Right ventricle myocardium superior (tissue), 1 donor: ENCODE measurements at regions of chr17 and their contacts with region 1.

Region 1: DNA sequence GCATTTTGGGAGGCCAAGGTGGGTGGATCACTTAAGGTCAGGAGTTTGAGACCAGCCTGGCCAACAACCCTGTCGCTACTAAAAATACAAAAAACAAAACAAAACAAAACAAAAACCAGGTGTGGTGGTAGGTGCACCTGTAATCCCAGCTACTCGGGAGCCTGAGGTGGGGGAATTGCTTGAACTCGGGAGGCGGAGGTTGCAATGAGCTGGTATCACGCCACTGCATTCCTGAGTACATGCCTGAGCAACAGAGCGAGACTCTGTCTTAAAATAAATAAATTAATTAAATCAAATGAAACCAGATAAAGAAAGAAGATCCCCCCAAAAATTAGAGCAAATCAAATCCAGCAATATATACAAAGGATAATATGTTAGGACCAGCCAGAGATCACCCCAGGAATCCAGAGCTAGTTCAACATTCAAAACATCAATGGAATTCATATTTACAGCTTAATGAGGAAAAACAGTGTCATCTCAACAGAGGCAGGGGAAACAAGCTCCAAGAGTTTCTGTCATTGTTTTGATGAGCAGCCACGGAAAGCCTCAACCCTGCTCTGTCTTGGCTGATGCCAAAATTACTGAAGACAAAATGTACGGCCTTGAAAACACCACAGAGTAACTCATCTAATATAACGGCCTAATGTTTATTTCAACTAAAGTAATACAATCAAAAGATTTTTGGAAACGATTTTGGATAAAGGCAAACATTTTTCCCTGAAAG is 3.7 kb downstream of the PEMT start:
- DNase-seq: no peak
- ATAC-seq: no peak

Region 2: DNA sequence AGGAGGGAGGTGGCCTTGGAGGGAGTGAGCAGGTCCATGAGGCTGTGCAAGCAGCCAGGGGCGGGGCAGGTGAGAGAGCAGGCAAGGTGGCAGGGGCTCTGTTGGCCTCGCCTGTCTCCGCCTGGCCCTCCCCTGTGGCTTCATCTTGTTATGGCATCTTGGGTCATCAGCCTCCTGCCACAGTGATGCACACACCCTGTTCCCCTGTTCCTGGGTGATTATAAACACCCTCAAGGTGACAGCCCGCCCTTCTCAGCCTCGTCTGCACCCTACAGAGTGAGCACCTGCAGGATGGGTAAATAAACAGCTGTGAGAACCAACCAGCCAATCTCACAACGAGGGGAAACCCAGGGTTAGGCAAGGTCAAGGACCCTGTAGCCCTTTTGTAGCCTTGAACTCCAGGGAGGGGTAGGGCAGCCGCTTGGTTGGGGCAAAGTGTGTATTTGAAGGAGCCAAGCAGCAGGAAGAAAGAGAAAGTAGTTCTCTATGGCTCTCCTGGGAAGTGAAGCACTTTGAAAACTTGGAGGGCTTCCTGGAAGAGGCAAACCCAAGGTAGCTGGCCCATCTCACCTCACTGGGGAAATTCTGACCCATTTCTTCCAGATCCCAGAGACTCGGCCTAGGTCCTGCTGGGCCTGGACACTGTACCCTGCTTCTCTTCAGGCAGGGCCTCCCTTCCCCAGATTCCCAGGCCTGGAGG is 224.0 kb before region 1 on chr17:
- intact Hi-C with region 1: loop called (anchors 5 kb)
- DNase-seq: peak; percentile 30
- ATAC-seq: no peak

Region 3: DNA sequence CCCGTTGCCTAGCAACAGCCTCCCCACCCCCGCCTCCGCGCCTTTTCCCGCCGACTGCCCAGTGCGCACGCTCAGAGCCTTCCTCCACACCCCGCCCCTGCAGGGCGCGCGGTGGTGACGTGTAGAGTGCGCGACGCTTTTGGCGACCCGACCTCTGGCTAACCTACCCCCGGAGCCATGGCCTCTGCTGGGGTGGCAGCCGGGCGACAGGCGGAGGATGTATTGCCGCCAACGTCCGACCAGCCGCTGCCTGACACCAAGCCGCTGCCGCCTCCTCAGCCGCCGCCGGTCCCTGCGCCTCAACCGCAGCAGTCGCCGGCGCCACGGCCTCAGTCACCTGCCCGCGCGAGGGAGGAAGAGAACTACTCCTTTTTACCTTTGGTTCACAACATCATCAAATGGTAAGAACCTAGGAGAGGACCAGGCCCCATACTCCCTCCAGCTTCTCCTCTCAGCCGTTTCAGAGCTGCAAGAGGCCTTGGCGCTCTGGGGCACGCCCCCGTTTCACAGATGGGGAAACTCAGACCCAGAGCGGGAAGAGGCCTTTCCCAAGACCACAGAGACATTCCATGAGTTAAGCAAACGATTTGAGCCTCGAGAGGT is 110.8 kb before region 1 on chr17 and contains the start of gene MED9:
- intact Hi-C with region 1: no loop called
- DNase-seq: peak; percentile 96
- ATAC-seq: peak; percentile 99
- total RNA-seq, gene MED9: 37.5 TPM